HEK293 (cell line): ENCODE measurements at regions of chr2 and their contacts with region 1.

Region 1: GRCh38 chr2:69375494-69376353 is 11.3 kb downstream of the GFPT1 start:
- H3K4me3 ChIP-seq: no peak overlapping the region
- H3K27ac ChIP-seq: no peak overlapping the region
- H3K4me1 ChIP-seq: no peaks in the 10 kb centered on the region
- CTCF ChIP-seq: no peak

Region 2: DNA sequence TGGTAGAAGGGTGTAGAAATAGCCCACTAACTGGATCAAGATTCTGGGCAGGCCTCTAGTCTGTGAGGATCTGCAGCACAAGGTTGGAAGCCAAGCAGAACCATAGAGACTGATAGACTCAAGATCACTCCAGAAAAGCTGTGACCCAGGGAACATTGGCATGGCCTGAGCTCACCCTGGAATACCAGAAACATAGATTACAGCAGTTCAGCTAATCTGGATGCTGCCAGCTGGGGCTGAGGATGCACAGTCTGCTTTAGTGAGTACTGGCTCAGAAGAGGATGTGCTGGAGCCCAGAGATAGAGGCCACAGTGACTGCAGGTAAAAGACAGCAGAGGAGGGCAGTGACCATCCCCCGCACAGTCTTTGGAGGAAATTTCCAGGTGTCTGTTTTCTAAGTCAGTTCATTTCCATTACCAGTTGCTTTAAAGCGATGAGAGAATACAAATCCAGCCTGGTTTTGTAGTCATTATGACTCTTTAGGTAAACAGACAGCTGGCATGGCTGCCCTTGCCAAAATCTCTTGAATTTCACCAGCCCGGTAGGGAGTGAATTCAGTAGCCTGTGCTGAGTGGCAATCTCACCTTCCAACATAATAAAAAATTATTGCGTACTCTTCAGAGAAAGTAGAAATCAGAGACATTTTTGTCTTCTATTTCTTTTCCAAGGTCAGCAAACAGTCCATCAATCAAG is 243.6 kb before region 1 on chr2:
- CTCF ChIA-PET with region 1: no interaction called
- POLR2A ChIA-PET with region 1: no interaction called
- H3K4me3 ChIP-seq: no peak overlapping the region
- H3K27ac ChIP-seq: no peak overlapping the region
- H3K4me1 ChIP-seq: 0 out of 2 replicates have a peak, but pooled peaks cover 3% of the 10 kb centered on the region
- CTCF ChIP-seq: no peak

Region 3: GRCh38 chr2:69356471-69356870 is 19.3 kb before region 1 on chr2:
- CTCF ChIA-PET with region 1: interaction called, 12 read pairs
- POLR2A ChIA-PET with region 1: no interaction called
- H3K4me3 ChIP-seq: no peak overlapping the region
- H3K27ac ChIP-seq: no peak overlapping the region
- H3K4me1 ChIP-seq: no peaks in the 10 kb centered on the region
- CTCF ChIP-seq: no peak

Region 4: GRCh38 chr2:69386789-69387734 is 11.3 kb after region 1 on chr2 and contains the start of gene GFPT1:
- CTCF ChIA-PET with region 1: interaction called, 17 read pairs
- POLR2A ChIA-PET with region 1: interaction called, 4 read pairs
- H3K4me3 ChIP-seq: peak within 1 kb of the TSS; percentile 98
- H3K27ac ChIP-seq: peak within 1 kb of the TSS; percentile 72; the same call in 1 of the 2 replicates
- H3K4me1 ChIP-seq: no peaks in the 10 kb centered on the region
- CTCF ChIP-seq: peak; percentile 21; the same call in 1 of the 2 replicates